ENCODE measurements at regions of chr2 and their contacts with region 1.

Region 1: GRCh38 chr2:218898109-218898878 is 17.6 kb downstream of the WNT10A start:
- DNase-seq: peak; percentile 91
- ATAC-seq: peak; percentile 15
- H3K4me3 Mint-ChIP-seq: peak overlapping the region; percentile 49
- H3K27ac Mint-ChIP-seq: no peak overlapping the region
- H3K4me1 Mint-ChIP-seq: peaks cover 42% of the 10 kb centered on the region
- H3K27me3 Mint-ChIP-seq: peaks cover 30% of the 10 kb centered on the region

Region 2: DNA sequence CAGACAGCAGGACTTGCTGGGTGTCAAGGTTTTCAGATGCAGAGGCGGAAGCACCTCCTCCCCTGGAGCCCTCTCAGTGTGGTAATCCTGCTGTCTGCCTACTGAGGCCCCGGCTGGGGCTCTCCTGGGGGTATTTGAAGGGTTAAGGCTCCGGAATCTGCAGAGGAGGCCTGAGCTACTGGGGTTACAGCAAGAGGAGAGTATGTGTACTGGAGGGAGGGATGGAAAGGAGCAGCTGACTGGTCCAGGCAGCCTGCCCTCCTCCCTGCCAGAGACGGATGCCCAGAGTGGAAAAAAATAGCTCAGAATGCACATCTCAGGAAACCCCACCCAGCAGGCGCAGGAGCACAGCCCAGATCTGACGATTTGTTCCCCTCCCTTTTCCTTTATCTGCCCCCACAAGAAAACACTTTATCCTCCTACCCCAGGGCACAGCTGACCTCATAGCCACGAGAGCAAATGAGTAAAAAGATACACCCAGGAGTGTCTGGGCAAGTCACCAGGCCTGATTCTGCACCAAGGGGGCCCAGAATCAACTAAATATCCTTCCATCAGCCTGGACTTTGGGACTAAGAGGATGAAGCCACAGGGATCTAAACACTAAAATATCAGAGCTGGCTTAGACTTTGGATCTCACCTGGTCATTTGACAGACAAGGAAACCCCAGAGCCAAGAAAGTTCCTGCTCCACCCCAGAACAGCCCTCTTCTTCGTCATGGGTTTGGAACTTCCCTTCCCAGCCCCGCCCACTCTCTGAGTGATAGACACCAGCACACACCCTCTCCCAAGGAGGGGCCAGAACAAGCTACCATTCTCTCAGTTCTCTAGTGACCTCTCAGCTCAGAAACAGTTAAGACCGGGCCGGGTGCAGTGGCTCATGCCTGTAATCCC is 611.5 kb before region 1 on chr2:
- CTCF ChIA-PET with region 1: no interaction called
- POLR2A ChIA-PET with region 1: no interaction called
- intact Hi-C with region 1: loop called in 1 of 2 experiments (anchors 5 kb)
- DNase-seq: peak; percentile 91
- ATAC-seq: peak; percentile 74
- H3K4me3 Mint-ChIP-seq: peak overlapping the region; percentile 80
- H3K27ac Mint-ChIP-seq: peak overlapping the region; percentile 99
- H3K4me1 Mint-ChIP-seq: peaks cover 88% of the 10 kb centered on the region
- H3K27me3 Mint-ChIP-seq: no peaks in the 10 kb centered on the region

Region 3: DNA sequence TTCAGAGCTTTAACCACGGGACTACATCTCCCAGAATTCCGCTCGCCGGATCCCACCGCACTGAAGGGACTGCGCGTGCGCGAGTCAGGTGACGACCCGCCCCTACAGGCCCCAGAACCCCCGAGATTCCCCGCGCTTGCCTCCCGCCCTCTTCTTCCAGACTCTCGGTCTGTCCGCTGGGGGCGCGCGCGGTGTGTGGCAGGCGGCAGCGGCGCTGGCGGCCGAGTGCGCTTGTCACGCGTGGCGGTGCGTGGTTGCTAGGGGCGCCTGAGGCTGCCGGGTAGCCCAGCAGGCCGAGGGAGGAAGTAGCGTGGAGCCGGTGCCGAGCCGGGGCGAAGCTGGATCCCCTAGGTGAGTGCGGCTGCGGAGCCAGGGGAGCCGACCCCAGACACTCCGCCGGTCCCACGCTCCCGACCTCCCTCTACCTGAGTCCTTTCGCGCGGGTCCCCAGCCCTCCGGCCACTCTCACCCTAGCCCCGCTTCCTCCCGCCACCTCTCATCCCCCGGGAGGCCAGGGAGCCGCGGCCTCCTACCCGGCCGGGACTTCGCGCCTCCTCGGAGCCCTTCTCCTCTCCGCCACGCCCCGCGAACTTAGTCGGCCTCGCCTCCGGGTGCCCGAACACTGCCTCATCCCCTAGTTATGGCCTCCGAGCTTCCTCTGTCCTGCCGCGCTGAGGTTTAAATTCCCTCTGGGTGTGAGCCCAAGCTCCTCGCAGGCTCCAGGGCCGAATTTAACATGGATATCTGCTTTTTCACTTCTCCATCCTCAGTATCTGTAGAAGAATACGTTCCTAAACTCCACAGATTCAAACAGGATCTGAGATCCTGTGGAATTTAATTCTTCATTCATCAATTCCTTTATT is 187.4 kb before region 1 on chr2 and contains the start of gene TTLL4:
- CTCF ChIA-PET with region 1: interaction called, 3 read pairs
- POLR2A ChIA-PET with region 1: no interaction called
- intact Hi-C with region 1: loop called in 1 of 2 experiments (anchors 1 kb)
- DNase-seq: peak; percentile 99
- ATAC-seq: peak; percentile 98
- H3K4me3 Mint-ChIP-seq: peak within 1 kb of the TSS; percentile 96
- H3K27ac Mint-ChIP-seq: peak within 1 kb of the TSS; percentile 80
- H3K4me1 Mint-ChIP-seq: peaks cover 20% of the 10 kb centered on the region
- H3K27me3 Mint-ChIP-seq: no peaks in the 10 kb centered on the region
- total RNA-seq, gene TTLL4: 33.7 to 46.6 TPM

Region 4: DNA sequence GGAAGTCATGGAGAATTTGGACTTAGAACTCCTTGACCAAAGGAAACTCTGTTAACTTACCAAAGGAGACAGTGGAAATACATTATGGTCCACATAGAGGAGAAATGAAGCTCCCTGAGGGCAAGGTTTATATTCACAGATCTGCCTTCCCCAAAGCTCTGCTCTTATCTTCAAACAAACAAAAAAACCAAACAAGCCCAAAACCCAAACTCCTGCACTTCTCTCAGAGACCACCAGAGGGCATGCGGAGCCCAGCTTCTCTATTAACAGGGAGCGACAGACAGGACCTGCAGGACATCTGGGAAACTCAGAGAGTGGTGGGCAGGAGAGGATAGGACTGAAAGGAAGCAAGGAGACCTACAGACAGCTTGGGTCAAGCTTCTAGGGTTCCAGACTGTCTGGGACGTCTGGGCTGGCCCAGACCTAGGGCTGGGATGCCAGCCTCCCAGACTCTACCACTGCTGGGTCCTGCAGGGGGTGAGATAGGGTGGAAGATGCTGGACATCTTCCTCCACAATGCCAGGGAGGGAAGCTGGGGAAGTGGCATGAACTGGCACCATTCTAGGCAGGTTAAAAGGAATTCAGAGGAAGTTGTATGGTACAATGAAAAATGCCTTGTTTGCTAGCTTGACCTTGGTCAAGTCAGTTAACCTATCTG is 21.6 kb before region 1 on chr2:
- CTCF ChIA-PET with region 1: interaction called, 620 read pairs
- POLR2A ChIA-PET with region 1: interaction called, 15 read pairs
- intact Hi-C with region 1: loop called (anchors 1 kb)
- DNase-seq: peak; percentile 83
- ATAC-seq: no peak
- H3K4me3 Mint-ChIP-seq: no peak overlapping the region
- H3K27ac Mint-ChIP-seq: no peak overlapping the region
- H3K4me1 Mint-ChIP-seq: peaks cover 43% of the 10 kb centered on the region
- H3K27me3 Mint-ChIP-seq: peaks cover 39% of the 10 kb centered on the region

Region 5: GRCh38 chr2:218927422-218927821 is 29.1 kb after region 1 on chr2:
- CTCF ChIA-PET with region 1: no interaction called
- POLR2A ChIA-PET with region 1: no interaction called
- intact Hi-C with region 1: no loop called
- DNase-seq: no peak
- ATAC-seq: no peak
- H3K4me3 Mint-ChIP-seq: no peak overlapping the region
- H3K27ac Mint-ChIP-seq: no peak overlapping the region
- H3K4me1 Mint-ChIP-seq: no peaks in the 10 kb centered on the region
- H3K27me3 Mint-ChIP-seq: peaks cover 21% of the 10 kb centered on the region

Region 6: DNA sequence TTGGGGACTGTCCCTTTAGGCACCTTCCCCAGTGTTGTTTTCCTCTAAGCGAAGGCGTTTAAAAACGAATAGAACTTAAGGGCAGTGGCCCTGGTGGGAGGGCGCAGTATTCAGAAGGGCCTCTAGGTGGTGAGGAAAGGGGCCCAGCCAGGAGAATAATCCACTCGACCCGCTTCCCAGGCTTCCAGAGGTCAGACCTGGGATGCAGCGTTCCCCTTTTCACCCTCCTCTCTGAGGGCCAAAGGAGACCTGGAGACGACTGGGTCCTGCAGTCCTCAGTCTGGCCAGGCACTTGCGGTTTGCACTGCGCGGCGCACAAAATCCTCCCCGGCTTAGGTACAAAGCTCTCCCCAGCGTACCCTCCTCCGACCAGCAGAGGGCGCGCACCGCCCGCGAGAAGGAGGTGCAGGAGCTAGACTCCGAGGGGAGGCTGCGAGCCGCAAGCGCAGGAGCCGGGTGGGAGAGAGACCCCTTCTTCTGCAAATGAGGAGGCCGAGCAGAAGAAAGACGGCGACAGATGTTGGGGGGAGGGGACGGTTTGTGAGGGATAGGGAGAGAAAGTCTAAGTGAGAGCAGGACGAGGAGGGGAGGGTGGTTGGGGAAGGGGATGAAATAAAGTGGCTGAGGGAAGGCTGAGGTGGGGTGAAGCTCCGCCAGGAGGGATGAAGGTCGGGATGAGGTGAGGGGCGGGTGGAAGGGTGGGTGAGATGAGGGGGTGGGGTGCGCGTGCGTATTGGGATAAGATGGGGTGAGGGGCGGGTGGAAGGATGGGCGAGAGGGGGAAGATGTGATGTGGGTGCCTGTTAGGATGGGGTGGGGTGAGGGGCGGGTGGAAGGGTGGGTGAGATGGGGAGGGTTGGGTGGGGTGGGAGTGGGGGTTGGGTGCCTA is 81.8 kb after region 1 on chr2:
- CTCF ChIA-PET with region 1: interaction called, 18 read pairs
- POLR2A ChIA-PET with region 1: no interaction called
- intact Hi-C with region 1: no loop called
- DNase-seq: peak; percentile 93
- ATAC-seq: peak; percentile 90
- H3K4me3 Mint-ChIP-seq: peak overlapping the region; percentile 43
- H3K27ac Mint-ChIP-seq: no peak overlapping the region
- H3K4me1 Mint-ChIP-seq: peaks cover 28% of the 10 kb centered on the region
- H3K27me3 Mint-ChIP-seq: peaks cover 56% of the 10 kb centered on the region

Region 7: GRCh38 chr2:219498280-219499057 is 600.2 kb after region 1 on chr2 and contains the start of gene GMPPA:
- CTCF ChIA-PET with region 1: no interaction called
- POLR2A ChIA-PET with region 1: no interaction called
- intact Hi-C with region 1: loop called in 1 of 2 experiments (anchors 5 kb)
- DNase-seq: peak; percentile 96
- ATAC-seq: peak; percentile 97
- H3K4me3 Mint-ChIP-seq: peak within 1 kb of the TSS; percentile 86
- H3K27ac Mint-ChIP-seq: peak within 1 kb of the TSS; percentile 72
- H3K4me1 Mint-ChIP-seq: peaks cover 38% of the 10 kb centered on the region
- H3K27me3 Mint-ChIP-seq: peaks cover 38% of the 10 kb centered on the region
- total RNA-seq, gene GMPPA: 35.2 to 35.5 TPM

Measured in activated CD4-positive, alpha-beta T cell treated with anti-CD3 and anti-CD28 coated beads for 36 hours (primary cell).